PC-3 (cell line): ENCODE measurements at regions of chr6 and their contacts with region 1.

Region 1: DNA sequence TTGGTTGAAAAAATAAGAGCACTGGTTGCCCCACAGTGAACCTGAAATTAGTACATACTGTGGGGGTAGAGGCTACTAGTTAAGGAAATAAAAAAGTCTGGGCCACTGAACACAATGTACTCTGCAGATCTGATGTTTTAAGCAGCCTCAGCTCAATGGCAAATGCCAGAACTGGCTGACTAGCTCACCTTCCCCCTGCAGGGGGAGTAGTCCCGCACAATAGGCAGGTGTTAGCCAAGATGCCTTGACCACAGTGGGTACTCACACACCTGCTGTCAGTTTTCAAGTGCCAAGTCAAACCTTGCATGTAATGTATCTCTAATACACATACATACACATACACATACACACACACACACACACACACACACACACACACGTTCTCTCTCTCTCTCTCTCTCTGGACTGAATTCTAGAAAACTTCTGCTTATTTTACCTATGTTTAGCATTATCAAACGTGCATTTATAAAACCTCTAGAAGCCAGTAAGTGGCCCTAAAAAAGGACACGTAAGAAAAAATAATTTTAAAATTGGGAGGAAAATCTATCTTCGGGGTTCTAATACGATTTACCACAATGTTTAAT is 36.1 kb downstream of the GMDS start:
- DNase-seq: peak; percentile 88
- ATAC-seq: peak; percentile 97
- H3K4me3 ChIP-seq: no peak overlapping the region
- H3K27ac ChIP-seq: no peak overlapping the region
- H3K4me1 ChIP-seq: no peaks in the 10 kb centered on the region
- H3K27me3 ChIP-seq: no peaks in the 10 kb centered on the region
- CTCF ChIP-seq: peak; percentile 89

Region 2: DNA sequence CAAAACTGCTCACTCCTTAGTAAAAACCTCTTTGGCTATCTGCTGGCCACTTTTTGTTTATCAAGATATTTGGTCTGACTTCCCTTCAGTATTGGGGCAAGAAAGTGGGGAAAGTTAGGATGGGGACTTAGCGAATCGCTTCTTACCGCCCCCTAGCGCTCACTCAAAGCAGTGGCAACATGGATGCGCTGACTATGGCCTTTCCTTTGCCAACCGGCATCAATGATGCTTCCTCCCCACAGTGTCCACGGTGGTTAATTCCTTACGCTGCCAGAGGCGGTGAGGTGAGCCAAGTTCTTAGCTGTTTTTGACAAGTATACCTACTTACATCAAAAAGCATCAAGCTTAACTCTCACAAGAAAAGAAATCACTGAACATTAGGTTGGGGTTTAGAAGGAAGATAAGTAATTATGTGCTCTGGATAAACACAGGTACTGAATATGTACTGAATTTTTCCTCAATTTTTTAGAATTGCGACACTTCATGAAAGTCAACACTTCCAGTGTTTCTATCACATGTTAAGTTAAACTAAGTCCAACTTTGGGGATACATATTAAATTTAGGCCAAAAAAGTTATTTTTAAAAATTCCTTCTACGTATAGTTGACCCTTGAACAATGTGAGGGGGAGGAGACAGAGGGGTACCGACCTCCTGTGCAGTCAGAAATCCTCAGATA is 50.6 kb before region 1 on chr6:
- CTCF ChIA-PET with region 1: no interaction called
- POLR2A ChIA-PET with region 1: no interaction called
- intact Hi-C with region 1: no loop called
- DNase-seq: peak; percentile 25
- ATAC-seq: no peak
- H3K4me3 ChIP-seq: no peak overlapping the region
- H3K27ac ChIP-seq: no peak overlapping the region
- H3K4me1 ChIP-seq: peaks cover 22% of the 10 kb centered on the region
- H3K27me3 ChIP-seq: no peaks in the 10 kb centered on the region
- CTCF ChIP-seq: peak; percentile 52

Region 3: GRCh38 chr6:2245094-2245876 is 36.0 kb after region 1 on chr6 and contains the start of gene GMDS:
- CTCF ChIA-PET with region 1: interaction called, 4 read pairs
- POLR2A ChIA-PET with region 1: interaction called, 3 read pairs
- intact Hi-C with region 1: loop called (anchors 5 kb)
- DNase-seq: peak; percentile 94
- ATAC-seq: peak; percentile 92
- H3K4me3 ChIP-seq: peak within 1 kb of the TSS; percentile 94
- H3K27ac ChIP-seq: peak within 1 kb of the TSS; percentile 92
- H3K4me1 ChIP-seq: peaks cover 29% of the 10 kb centered on the region
- H3K27me3 ChIP-seq: no peaks in the 10 kb centered on the region
- CTCF ChIP-seq: no peak
- total RNA-seq, gene GMDS: 18.3 and 21.0 TPM in 2 replicates

Region 4: GRCh38 chr6:2353412-2354137 is 144.3 kb after region 1 on chr6:
- CTCF ChIA-PET with region 1: interaction called, 12 read pairs
- POLR2A ChIA-PET with region 1: no interaction called
- intact Hi-C with region 1: loop called (anchors 1 kb)
- DNase-seq: peak; percentile 90
- ATAC-seq: peak; percentile 61
- H3K4me3 ChIP-seq: no peak overlapping the region
- H3K27ac ChIP-seq: no peak overlapping the region
- H3K4me1 ChIP-seq: no peaks in the 10 kb centered on the region
- H3K27me3 ChIP-seq: no peaks in the 10 kb centered on the region
- CTCF ChIP-seq: peak; percentile 94

Region 5: GRCh38 chr6:2940010-2940850 is 730.9 kb after region 1 on chr6:
- CTCF ChIA-PET with region 1: no interaction called
- POLR2A ChIA-PET with region 1: interaction called, 10 read pairs
- intact Hi-C with region 1: no loop called
- DNase-seq: no peak
- ATAC-seq: no peak
- H3K4me3 ChIP-seq: no peak overlapping the region
- H3K27ac ChIP-seq: no peak overlapping the region
- H3K4me1 ChIP-seq: no peaks in the 10 kb centered on the region
- H3K27me3 ChIP-seq: no peaks in the 10 kb centered on the region
- CTCF ChIP-seq: no peak